CD8-positive, alpha-beta memory T cell (primary cell): ENCODE measurements at regions of chr1 and their contacts with region 1.

Region 1: DNA sequence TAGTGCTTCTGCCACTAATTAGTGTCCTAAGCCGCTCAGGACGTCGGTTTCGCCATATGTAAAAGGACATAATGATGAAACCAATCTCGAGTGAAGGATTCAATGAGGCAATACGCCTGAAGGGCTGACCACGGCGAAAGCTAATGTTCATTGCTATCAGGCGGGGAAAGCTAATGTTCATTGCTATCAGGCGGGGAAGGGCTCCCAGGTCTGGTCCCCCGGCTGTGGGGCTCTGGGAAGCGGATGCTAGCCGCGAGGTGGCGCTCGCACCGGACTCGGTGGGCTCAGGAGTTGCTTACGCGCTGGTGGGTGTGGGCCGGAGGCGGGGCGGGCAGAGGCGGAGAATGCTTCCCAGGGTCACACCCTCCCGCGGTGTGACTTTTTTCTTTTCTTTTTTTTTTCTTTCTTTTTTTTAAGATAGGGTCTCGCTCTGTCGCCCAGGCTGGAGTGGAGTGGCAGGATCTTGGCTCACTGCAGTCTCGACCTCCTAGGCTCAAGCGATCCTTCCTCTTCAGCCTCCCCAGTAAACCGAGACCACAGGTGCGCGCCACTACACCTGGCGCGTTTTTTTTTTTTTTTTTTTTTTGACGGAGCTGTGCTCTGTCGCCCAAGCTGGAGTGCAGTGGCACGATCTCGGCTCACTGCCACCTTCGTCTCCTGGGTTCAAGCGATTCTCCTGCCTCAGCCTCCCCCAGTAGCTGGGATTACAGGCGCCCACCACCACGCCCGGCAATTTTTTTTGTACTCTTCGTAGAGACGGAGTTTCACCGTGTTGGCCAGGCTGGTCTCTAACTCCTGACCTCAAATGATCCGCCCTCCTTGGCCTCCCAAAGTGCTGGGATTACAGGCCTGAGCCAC is 1.1 kb upstream of the PEAR1 start:
- DNase-seq: peak; percentile 76 to 86 (median 77)
- H3K4me3 ChIP-seq: peak overlapping the region; percentile 20
- H3K4me3 Mint-ChIP-seq: peak overlapping the region; percentile 70 to 83 (median 75)
- H3K27ac ChIP-seq: no peak overlapping the region
- H3K27ac Mint-ChIP-seq: peak overlapping the region in 1 of 8 donors; percentile 72
- H3K4me1 ChIP-seq: peaks cover 16% of the 10 kb centered on the region
- H3K4me1 Mint-ChIP-seq: peaks cover 15 to 20% (median 16%) of the 10 kb centered on the region in 3 donors
- H3K27me3 ChIP-seq: peaks cover 3% of the 10 kb centered on the region
- H3K27me3 Mint-ChIP-seq: peaks cover 46 to 69% of the 10 kb centered on the region in 2 donors

Region 2: GRCh38 chr1:156797212-156797871 is 95.1 kb before region 1 on chr1:
- CTCF ChIA-PET with region 1: interaction called, 13 read pairs
- POLR2A ChIA-PET with region 1: no interaction called
- DNase-seq: peak; percentile 35 to 70 (median 56)
- H3K4me3 ChIP-seq: no peak overlapping the region
- H3K4me3 Mint-ChIP-seq: no peak overlapping the region
- H3K27ac ChIP-seq: no peak overlapping the region
- H3K27ac Mint-ChIP-seq: peak overlapping the region in 5 of 8 donors; percentile 21 to 72 (median 52)
- H3K4me1 ChIP-seq: no peaks in the 10 kb centered on the region
- H3K4me1 Mint-ChIP-seq: peaks cover 17 to 28% (median 18%) of the 10 kb centered on the region in 3 donors
- H3K27me3 ChIP-seq: no peaks in the 10 kb centered on the region
- H3K27me3 Mint-ChIP-seq: peaks cover 0 to 5% of the 10 kb centered on the region in 2 donors

Region 3: GRCh38 chr1:156876281-156876680 is 16.1 kb before region 1 on chr1:
- CTCF ChIA-PET with region 1: interaction called, 10 read pairs
- POLR2A ChIA-PET with region 1: no interaction called
- DNase-seq: no peak
- H3K4me3 ChIP-seq: no peak overlapping the region
- H3K4me3 Mint-ChIP-seq: no peak overlapping the region
- H3K27ac ChIP-seq: no peak overlapping the region
- H3K27ac Mint-ChIP-seq: no peak overlapping the region
- H3K4me1 ChIP-seq: no peaks in the 10 kb centered on the region
- H3K4me1 Mint-ChIP-seq: no peaks in the 10 kb centered on the region
- H3K27me3 ChIP-seq: no peaks in the 10 kb centered on the region
- H3K27me3 Mint-ChIP-seq: peaks cover 10 to 47% of the 10 kb centered on the region in 2 donors

Region 4: GRCh38 chr1:156927215-156928042 is 35.0 kb after region 1 on chr1:
- CTCF ChIA-PET with region 1: interaction called, 16 read pairs
- POLR2A ChIA-PET with region 1: no interaction called
- DNase-seq: peak; percentile 35 to 70 (median 43)
- H3K4me3 ChIP-seq: no peak overlapping the region
- H3K4me3 Mint-ChIP-seq: peak overlapping the region in 4 of 7 donors; percentile 15 to 50 (median 29)
- H3K27ac ChIP-seq: no peak overlapping the region
- H3K27ac Mint-ChIP-seq: peak overlapping the region in 1 of 8 donors; percentile 56
- H3K4me1 ChIP-seq: peaks cover 7% of the 10 kb centered on the region
- H3K4me1 Mint-ChIP-seq: peaks cover 12 to 38% (median 13%) of the 10 kb centered on the region in 3 donors
- H3K27me3 ChIP-seq: peaks cover 31% of the 10 kb centered on the region
- H3K27me3 Mint-ChIP-seq: peaks cover 71 to 90% of the 10 kb centered on the region in 2 donors